MCF 10A (cell line): ENCODE measurements at regions of chr7 and their contacts with region 1.

Region 1: DNA sequence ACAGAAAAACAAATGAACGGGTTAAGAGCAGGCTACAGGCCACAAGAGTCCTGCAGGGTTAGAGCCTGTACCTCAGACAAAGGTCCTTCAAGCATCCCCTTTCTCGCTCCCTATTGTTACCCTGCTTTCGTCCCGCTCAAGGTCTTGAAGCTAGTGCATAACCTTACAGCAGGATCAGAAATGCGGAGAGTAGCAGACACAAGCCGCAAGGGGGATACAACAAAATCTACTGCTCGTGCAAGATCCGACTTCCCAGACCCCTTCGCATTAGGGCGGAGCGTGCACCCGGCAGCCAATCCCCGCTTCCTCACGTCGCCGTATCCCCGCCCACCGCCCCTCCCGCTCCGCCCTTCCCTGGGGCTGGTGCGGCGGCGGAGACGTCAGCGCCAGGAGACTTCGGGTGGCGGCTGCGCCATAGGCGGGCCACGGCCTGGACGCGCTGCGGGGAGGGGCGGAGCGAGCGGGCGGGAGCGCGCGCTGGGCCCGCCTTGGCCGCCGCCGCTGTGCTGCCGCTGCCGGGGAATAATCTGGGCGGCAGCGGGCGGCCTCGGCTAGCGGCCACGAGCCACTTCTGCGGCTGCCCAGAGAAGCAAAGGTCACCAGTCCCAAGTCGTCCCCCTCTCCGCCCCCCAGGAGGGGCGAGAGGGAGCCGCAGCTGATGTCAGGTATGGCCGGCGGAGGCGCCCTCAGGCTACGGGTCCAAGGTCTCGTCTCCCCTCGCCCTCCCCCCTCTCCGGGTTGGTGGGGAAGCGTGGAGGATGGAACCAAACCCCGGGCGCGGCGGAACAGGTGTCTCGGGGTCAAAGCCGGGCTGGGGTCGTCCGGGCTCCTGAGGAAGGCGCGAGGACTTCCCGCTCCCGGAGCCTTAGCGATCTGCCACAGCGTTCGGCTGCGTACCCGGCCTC is at the start of gene C1GALT1:
- DNase-seq: peak; percentile 98
- H3K4me3 Mint-ChIP-seq: peak within 1 kb of the TSS; percentile 98
- H3K27ac Mint-ChIP-seq: peak within 1 kb of the TSS; percentile 94
- H3K4me1 Mint-ChIP-seq: peaks cover 26% of the 10 kb centered on the region
- H3K27me3 Mint-ChIP-seq: no peaks in the 10 kb centered on the region
- CTCF ChIP-seq: peak; percentile 17
- total RNA-seq, gene C1GALT1: 30.9 and 39.6 TPM in 2 replicates

Region 2: GRCh38 chr7:7122701-7123281 is 59.6 kb before region 1 on chr7:
- CTCF ChIA-PET with region 1: interaction called, 4 read pairs
- POLR2A ChIA-PET with region 1: interaction called, 87 read pairs
- intact Hi-C with region 1: loop called (anchors 1 kb)
- DNase-seq: peak; percentile 97
- H3K4me3 Mint-ChIP-seq: no peak overlapping the region
- H3K27ac Mint-ChIP-seq: peak overlapping the region; percentile 9
- H3K4me1 Mint-ChIP-seq: peaks cover 13% of the 10 kb centered on the region
- H3K27me3 Mint-ChIP-seq: no peaks in the 10 kb centered on the region
- CTCF ChIP-seq: no peak

Region 3: GRCh38 chr7:7221602-7222038 is 39.2 kb after region 1 on chr7:
- CTCF ChIA-PET with region 1: interaction called, 3 read pairs
- POLR2A ChIA-PET with region 1: interaction called, 55 read pairs
- intact Hi-C with region 1: no loop called
- DNase-seq: peak; percentile 89
- H3K4me3 Mint-ChIP-seq: peak overlapping the region; percentile 31
- H3K27ac Mint-ChIP-seq: peak overlapping the region; percentile 92
- H3K4me1 Mint-ChIP-seq: peaks cover 24% of the 10 kb centered on the region
- H3K27me3 Mint-ChIP-seq: no peaks in the 10 kb centered on the region
- CTCF ChIP-seq: no peak

Region 4: DNA sequence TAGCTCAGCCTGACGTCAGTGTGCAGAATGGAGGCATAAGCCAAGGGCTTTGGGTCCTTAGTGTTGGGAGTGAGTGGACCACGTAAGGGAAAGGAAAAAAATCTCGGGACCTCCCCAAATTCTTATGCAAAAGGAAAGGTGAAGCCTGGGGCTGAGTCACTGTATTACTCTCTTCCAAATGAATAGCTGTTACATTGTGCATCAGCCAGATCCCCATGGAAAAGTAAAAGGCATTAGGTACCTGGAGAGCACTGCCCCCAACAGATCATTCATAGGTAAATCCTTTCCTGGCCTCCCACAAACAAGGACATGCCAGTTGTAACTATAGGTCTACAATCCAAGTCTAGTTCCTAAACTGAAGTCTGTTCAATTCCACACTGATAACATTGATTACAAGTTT is 170.4 kb after region 1 on chr7:
- CTCF ChIA-PET with region 1: no interaction called
- POLR2A ChIA-PET with region 1: interaction called, 6 read pairs
- intact Hi-C with region 1: loop called (anchors 1 kb)
- DNase-seq: peak; percentile 74
- H3K4me3 Mint-ChIP-seq: no peak overlapping the region
- H3K27ac Mint-ChIP-seq: no peak overlapping the region
- H3K4me1 Mint-ChIP-seq: no peaks in the 10 kb centered on the region
- H3K27me3 Mint-ChIP-seq: no peaks in the 10 kb centered on the region
- CTCF ChIP-seq: peak; percentile 24

Region 5: DNA sequence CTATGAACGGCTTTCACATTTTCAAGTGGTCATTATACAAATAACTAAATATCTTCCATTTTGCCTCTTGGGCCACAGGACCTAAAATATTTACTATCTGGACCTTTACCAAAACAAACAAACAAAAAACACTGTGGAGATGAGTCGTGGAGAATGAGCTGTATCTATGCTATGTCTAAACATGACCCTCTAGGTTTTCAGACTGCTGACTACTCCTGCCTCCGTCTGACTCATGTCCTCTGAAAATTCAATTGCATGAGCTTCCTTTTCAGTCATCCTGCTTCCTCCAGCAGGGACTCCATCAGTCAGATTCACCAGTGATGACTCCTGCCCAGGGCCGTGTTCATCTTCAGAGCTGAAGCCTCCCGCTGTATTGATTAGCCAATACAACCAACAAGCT is 256.4 kb after region 1 on chr7:
- CTCF ChIA-PET with region 1: interaction called, 3 read pairs
- POLR2A ChIA-PET with region 1: interaction called, 5 read pairs
- intact Hi-C with region 1: loop called (anchors 5 kb)
- DNase-seq: peak; percentile 95
- H3K4me3 Mint-ChIP-seq: peak overlapping the region; percentile 36
- H3K27ac Mint-ChIP-seq: peak overlapping the region; percentile 88
- H3K4me1 Mint-ChIP-seq: peaks cover 13% of the 10 kb centered on the region
- H3K27me3 Mint-ChIP-seq: no peaks in the 10 kb centered on the region
- CTCF ChIP-seq: no peak